Activated CD4-positive, alpha-beta T cell treated with anti-CD3 and anti-CD28 coated beads for 36 hours (primary cell): ENCODE measurements at regions of chr4 and their contacts with region 1.

Region 1: DNA sequence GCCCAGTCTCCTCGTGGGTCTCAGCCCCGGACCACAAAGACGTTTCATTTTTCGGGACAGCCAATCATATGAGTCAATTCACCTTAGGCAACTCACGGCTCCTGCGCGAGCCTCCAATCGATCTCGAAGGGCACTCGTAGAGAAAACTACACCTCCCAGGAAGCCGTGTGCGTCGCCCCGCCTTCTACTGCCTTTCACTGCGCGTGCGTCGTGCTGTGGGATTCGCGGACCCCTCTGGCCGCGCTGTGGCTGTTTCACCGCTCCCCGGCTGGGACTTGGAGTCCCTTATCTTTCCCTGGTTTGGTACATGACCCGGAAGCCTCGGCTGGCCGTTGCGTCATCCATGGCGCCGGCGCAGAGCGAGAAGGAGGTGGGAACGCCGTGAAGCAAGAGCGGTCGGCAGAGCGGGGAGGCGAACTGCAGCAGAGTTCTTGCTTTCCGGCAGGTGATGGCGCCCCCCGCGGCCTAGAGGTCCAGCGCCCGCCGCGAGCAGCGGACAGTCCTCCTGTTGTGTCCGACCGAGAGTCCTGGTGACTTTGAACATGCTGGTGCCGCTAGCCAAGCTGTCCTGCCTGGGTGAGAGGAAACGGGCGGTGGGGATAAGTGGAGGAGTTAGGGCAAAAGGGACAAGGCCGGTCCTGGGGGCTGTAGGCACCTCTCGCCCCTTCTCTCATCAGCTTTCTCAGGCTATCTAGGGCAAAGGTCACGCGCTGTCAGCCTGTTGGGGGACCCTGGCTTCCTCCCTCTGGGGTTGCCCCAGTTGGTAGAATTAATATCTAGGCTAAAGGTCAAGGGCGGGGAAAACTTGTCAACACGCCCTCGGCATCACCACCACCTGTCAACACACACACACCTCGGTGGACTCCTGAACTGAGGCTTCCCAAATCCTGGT is at the start of gene ETFDH:
- DNase-seq: peak; percentile 98
- ATAC-seq: peak; percentile 88
- H3K4me3 Mint-ChIP-seq: peak within 1 kb of the TSS; percentile 97
- H3K27ac Mint-ChIP-seq: peak within 1 kb of the TSS; percentile 97
- H3K4me1 Mint-ChIP-seq: peaks cover 18% of the 10 kb centered on the region
- H3K27me3 Mint-ChIP-seq: no peaks in the 10 kb centered on the region
- total RNA-seq, gene ETFDH: 39.5 to 46.9 TPM

Region 2: GRCh38 chr4:158211222-158211621 is 460.9 kb before region 1 on chr4:
- CTCF ChIA-PET with region 1: no interaction called
- POLR2A ChIA-PET with region 1: no interaction called
- intact Hi-C with region 1: no loop called
- DNase-seq: no peak
- ATAC-seq: no peak
- H3K4me3 Mint-ChIP-seq: peak overlapping the region; percentile 15
- H3K27ac Mint-ChIP-seq: no peak overlapping the region
- H3K4me1 Mint-ChIP-seq: peaks cover 21% of the 10 kb centered on the region
- H3K27me3 Mint-ChIP-seq: peaks cover 28% of the 10 kb centered on the region

Region 3: GRCh38 chr4:158768555-158769174 is 96.5 kb after region 1 on chr4 and contains the start of gene FNIP2:
- CTCF ChIA-PET with region 1: interaction called, 4 read pairs
- POLR2A ChIA-PET with region 1: no interaction called
- intact Hi-C with region 1: loop called (anchors 1 kb)
- DNase-seq: peak; percentile 81
- ATAC-seq: peak; percentile 81
- H3K4me3 Mint-ChIP-seq: peak within 1 kb of the TSS; percentile 97
- H3K27ac Mint-ChIP-seq: peak within 1 kb of the TSS; percentile 93
- H3K4me1 Mint-ChIP-seq: peaks cover 41% of the 10 kb centered on the region
- H3K27me3 Mint-ChIP-seq: no peaks in the 10 kb centered on the region
- total RNA-seq, gene FNIP2: 11.6 to 13.0 TPM

Region 4: DNA sequence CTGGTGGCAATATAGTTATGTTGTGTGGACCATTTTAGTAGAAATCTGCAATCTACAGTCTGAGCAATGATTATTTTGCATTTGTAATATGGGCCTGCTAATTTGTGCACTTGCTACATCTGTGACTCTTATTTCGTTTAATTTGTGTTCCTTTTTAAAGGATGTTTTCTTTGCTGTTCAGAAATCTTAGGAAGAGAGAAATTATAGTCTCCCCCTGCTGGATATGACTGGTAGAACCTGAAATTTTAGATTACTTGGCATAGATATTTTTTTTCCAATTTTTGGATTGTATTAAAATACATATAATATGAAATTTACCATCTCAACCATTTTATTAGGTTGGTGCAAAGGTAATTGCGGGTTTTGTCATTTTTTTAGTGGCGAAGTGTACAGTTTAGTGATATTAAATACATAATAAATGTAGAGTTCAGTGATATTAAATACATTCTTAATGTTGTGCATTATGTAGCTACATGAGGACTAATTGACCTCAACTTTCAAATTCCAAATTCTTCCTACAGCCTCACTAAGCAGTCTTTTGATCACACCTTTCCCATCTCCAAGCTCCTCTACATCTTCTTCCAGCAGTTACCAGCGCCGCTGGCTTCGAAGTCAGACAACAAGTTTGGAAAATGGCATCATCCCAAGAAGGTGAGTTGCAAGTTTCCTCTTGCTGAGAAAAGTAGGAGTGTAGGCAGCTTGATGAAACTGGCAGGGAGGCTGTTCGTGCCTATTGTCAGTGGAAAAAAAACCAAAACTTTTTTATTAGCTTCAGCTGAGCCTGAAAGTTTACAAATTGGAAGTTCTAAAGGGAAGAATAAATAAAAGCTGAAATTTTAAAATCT is 178.9 kb after region 1 on chr4:
- CTCF ChIA-PET with region 1: interaction called, 4 read pairs
- POLR2A ChIA-PET with region 1: no interaction called
- intact Hi-C with region 1: loop called in 1 of 2 experiments (anchors 5 kb)
- DNase-seq: no peak
- ATAC-seq: no peak
- H3K4me3 Mint-ChIP-seq: no peak overlapping the region
- H3K27ac Mint-ChIP-seq: no peak overlapping the region
- H3K4me1 Mint-ChIP-seq: peaks cover 11% of the 10 kb centered on the region
- H3K27me3 Mint-ChIP-seq: no peaks in the 10 kb centered on the region

Region 5: DNA sequence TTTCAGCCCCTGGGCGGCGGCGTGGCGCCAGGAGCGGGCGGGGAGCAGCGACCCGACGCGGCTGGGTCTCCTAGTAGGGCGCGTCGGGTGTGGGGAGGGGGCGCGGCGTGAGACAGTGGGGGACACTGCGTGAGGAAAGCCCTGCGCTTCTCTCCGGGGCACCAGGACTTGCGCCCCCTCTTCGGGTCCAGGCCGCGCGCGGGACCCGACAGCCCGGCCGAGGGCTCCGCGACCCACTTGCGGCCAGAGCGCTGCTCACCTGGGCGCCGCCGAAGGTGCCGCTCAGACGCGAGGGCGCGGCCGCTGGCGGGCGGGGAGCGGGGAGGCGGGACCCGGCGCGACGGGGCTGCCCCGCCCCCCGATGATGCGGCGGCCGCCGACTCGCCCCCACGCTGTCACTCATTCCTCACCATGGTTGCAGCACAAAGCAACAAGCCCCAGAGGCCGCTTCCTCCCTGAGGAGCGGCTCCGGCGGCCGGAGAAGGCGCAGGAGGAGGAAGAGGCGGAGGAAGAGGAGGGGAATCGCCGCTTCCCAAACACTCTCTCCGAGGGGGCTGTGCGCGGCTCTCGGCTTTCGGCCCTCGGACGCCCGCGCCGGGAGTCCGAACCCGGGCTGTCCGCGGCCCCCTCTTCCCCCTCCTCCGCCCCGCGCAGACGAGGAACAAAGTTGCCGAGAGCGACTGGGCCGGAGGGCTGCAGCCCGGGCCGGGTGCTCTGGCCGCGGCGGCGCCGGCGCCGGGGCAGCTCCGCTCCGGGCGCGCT is 430.6 kb after region 1 on chr4 and contains the start of gene RAPGEF2:
- CTCF ChIA-PET with region 1: no interaction called
- POLR2A ChIA-PET with region 1: no interaction called
- intact Hi-C with region 1: loop called (anchors 1 to 2 kb)
- DNase-seq: peak; percentile 94
- ATAC-seq: peak; percentile 83
- H3K4me3 Mint-ChIP-seq: peak within 1 kb of the TSS; percentile 73
- H3K27ac Mint-ChIP-seq: peak within 1 kb of the TSS; percentile 70
- H3K4me1 Mint-ChIP-seq: peaks cover 49% of the 10 kb centered on the region
- H3K27me3 Mint-ChIP-seq: peaks cover 2% of the 10 kb centered on the region
- total RNA-seq, gene RAPGEF2: 18.5 to 20.2 TPM

Region 6: DNA sequence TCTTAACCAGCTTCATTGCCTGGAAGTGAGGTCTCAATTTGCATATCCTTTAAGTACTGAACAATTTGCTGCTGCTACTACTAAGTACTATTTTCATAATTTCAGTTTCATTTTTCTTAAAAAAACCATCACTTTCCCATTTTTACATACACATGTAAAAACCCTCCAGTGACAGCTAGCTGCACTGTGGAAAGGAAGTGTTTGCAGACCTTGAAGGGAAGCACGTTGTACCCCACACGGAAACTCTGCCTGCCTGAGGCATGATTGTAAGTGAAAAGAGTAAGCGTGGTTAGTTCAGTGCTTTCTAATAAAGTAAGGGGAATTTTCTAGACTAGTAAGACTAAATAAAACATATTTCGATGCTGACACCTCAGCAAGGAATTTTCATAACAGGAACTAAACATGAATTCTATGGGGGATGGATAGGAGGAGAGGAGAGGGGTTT is 534.3 kb after region 1 on chr4:
- CTCF ChIA-PET with region 1: interaction called, 3 read pairs
- POLR2A ChIA-PET with region 1: no interaction called
- intact Hi-C with region 1: loop called (anchors 1 kb)
- DNase-seq: peak; percentile 76
- ATAC-seq: peak; percentile 94
- H3K4me3 Mint-ChIP-seq: peak overlapping the region; percentile 62
- H3K27ac Mint-ChIP-seq: peak overlapping the region; percentile 89
- H3K4me1 Mint-ChIP-seq: peaks cover 52% of the 10 kb centered on the region
- H3K27me3 Mint-ChIP-seq: no peaks in the 10 kb centered on the region

Region 7: GRCh38 chr4:159856451-159856850 is 1184.3 kb after region 1 on chr4:
- CTCF ChIA-PET with region 1: no interaction called
- POLR2A ChIA-PET with region 1: no interaction called
- intact Hi-C with region 1: no loop called
- DNase-seq: no peak
- ATAC-seq: no peak
- H3K4me3 Mint-ChIP-seq: no peak overlapping the region
- H3K27ac Mint-ChIP-seq: no peak overlapping the region
- H3K4me1 Mint-ChIP-seq: no peaks in the 10 kb centered on the region
- H3K27me3 Mint-ChIP-seq: no peaks in the 10 kb centered on the region